HepG2 (cell line): ENCODE measurements at regions of chr12 and their contacts with region 1.

Region 1: GRCh38 chr12:57583008-57583831 is 7.8 kb upstream of the PIP4K2C start:
- DNase-seq: peak; percentile 86
- ATAC-seq: peak; percentile 76
- H3K4me3 ChIP-seq: no peak overlapping the region
- H3K27ac ChIP-seq: no peak overlapping the region
- H3K4me1 ChIP-seq: peaks cover 43% of the 10 kb centered on the region
- H3K27me3 ChIP-seq: no peaks in the 10 kb centered on the region
- CTCF ChIP-seq: peak; percentile 93
- EP300 ChIP-seq: no peak
- POLR2A ChIP-seq: no peak
- RAD21 ChIP-seq: peak; percentile 90

Region 2: DNA sequence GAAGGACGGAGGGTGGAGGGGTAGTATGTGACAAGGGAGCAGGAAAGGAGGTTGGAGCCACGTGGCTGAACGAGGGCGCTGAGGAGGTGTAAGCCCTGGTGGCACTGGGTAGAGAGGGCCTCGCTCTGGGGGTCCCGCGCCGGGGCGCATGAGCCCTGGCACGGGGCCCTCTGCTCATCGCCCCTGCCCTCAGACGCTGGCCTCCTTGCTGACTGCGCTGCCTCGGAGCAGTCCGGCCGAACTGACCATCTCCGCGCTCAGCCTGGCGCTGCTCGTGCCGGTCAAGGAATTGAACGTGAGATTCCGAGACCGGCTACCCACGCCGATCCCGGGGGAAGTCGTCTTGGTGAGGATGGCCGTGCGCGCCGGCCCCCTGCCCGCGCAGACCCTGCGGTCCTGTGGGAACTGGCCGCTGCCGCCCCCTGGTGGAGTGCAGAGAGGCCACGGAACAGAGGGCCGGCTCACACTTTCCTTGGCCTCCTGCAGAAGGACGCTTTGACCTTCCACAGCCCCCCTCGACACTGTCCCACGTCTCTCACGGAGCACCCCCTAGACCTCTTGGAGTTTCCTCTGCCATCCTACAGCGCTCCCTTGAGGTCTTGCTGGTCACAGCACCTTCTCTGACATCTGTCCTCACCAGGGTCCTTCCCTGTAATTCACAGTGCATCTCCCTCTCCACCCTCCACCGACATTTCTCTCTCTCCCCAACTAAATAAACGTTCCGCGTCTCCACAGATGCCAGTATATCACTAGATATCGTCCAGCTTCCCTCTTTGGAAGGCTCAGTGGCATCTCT is 38.5 kb after region 1 on chr12:
- CTCF ChIA-PET with region 1: interaction called, 53 read pairs
- POLR2A ChIA-PET with region 1: interaction called, 8 read pairs
- in situ Hi-C with region 1: loop called (anchors 5 kb)
- intact Hi-C with region 1: loop called (anchors 1 kb)
- DNase-seq: no peak
- ATAC-seq: peak; percentile 80
- H3K4me3 ChIP-seq: peak overlapping the region; percentile 31 to 70 (median 37)
- H3K27ac ChIP-seq: no peak overlapping the region
- H3K4me1 ChIP-seq: peaks cover 47% of the 10 kb centered on the region
- H3K27me3 ChIP-seq: peaks cover 16 to 50% of the 10 kb centered on the region in 2 experiments
- CTCF ChIP-seq: peak; percentile 98
- EP300 ChIP-seq: no peak
- POLR2A ChIP-seq: no peak
- RAD21 ChIP-seq: peak; percentile 92

Region 3: DNA sequence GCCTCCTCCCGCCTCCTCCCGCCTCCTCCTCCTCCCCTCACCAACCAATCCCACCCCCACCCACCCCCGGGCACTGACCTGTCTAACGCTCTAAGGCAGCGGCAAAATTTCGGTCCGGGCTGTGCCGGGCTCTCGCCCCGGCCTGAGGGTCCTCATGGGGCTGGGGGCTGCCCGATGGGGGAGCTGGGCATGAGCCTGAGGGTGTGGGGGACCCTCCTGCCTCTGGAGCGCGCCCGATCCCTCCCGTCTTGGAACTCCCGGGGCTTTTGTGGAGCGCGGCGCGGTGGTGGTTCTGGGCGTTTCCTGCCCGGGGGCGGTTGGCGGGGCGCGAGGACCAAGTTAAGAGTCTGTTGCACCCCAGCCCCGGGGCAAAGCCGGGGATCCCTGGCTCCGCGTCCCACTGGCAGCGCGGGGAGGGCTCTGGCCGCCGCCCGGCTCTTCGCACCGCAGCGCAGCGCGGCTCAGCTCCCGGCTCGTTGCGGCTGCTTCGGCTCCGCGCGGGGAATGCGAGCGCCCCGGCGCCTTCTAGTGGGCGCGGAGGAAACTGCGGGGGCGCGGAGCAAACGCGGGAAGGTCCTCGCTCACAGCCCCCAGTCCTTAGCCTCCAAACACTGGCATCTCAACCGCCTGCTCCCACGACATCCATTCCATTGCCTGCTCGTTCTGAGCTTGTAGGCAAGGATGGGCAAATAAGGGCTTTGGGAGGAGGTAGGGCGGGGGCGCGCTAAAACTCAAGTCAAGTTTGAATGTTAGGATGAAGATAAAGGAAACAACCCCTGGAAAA is 49.7 kb after region 1 on chr12 and contains the start of gene B4GALNT1:
- CTCF ChIA-PET with region 1: interaction called, 9 read pairs
- POLR2A ChIA-PET with region 1: interaction called, 5 read pairs
- in situ Hi-C with region 1: no loop called
- intact Hi-C with region 1: loop called (anchors 1 kb)
- DNase-seq: no peak
- ATAC-seq: peak; percentile 91
- H3K4me3 ChIP-seq: peak within 1 kb of the TSS; percentile 66 to 77 (median 68)
- H3K27ac ChIP-seq: no peak within 1 kb of the TSS
- H3K4me1 ChIP-seq: peaks cover 22% of the 10 kb centered on the region
- H3K27me3 ChIP-seq: no peaks in the 10 kb centered on the region; a peak in 1 of 5 replicates
- CTCF ChIP-seq: peak; percentile 88
- EP300 ChIP-seq: no peak; a peak in 1 of 4 replicates
- POLR2A ChIP-seq: no peak
- RAD21 ChIP-seq: peak; percentile 92
- total RNA-seq, gene B4GALNT1: 1.9 and 4.5 TPM in 2 replicates

Region 4: DNA sequence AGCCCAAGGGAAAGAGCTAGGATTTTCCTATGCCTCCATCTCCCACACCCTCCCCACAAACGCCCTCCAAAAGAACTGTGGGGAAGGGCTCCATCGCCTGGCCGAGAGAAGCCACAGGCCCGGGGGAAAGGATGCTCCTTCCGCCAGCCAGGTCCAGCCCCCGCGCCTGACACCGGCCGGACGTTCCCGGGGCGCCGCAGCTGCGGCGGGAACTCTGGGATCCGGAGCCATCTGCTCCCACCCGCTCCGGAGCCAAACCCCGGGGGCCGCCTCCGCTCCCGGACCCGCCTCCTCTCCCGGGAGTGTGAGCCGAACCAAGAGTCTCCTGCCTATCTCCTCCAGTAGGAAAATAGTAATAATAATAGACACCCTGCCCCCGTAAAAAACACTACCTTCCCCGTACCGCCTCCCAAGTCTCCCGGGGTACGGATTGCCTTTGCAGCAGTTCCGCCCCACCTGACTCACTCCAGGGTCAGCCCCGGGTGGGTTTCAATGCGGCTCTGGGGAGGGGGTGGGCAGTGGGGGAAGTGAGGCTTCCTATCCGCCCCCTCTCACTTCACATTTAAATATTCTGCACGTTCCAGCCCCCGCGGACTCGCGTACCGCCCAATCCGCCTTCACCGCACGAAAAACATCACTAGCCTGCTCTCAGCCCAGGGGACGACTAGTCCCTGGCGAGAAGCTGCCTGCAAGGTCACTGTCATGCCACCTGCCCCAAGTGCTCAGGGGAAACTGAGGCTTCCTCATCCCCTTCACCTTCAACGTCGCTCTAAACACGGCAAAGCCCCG is 152.9 kb after region 1 on chr12:
- CTCF ChIA-PET with region 1: no interaction called
- POLR2A ChIA-PET with region 1: no interaction called
- in situ Hi-C with region 1: no loop called
- intact Hi-C with region 1: loop called (anchors 5 kb)
- DNase-seq: peak; percentile 37
- ATAC-seq: peak; percentile 78
- H3K4me3 ChIP-seq: peak overlapping the region; percentile 48 to 73 (median 49)
- H3K27ac ChIP-seq: no peak overlapping the region
- H3K4me1 ChIP-seq: peaks cover 42% of the 10 kb centered on the region
- H3K27me3 ChIP-seq: peaks cover 12 to 64% of the 10 kb centered on the region in 2 experiments; a peak in 4 of 5 replicates
- CTCF ChIP-seq: peak; percentile 71
- EP300 ChIP-seq: no peak
- POLR2A ChIP-seq: no peak
- RAD21 ChIP-seq: peak; percentile 62; the same call in 1 of the 2 replicates